ENCODE measurements at regions of chr17 and their contacts with region 1.

Region 1: GRCh38 chr17:15999439-16000350 is at the starts of genes TTC19 and ZSWIM7:
- DNase-seq: peak; percentile 99
- ATAC-seq: peak; percentile 92 to 97 (median 94)
- H3K4me3 ChIP-seq: peak within 1 kb of the TSS; percentile 65 to 82 (median 76)
- H3K27ac ChIP-seq: peak within 1 kb of the TSS; percentile 88 to 96 (median 91)
- H3K4me1 ChIP-seq: peaks cover 0 to 14% (median 0%) of the 10 kb centered on the region in 4 donors
- H3K27me3 ChIP-seq: no peaks in the 10 kb centered on the region
- CTCF ChIP-seq: peak in 3 of 4 donors; percentile 10 to 29 (median 29)
- POLR2A ChIP-seq: peak; percentile 98
- total RNA-seq, gene TTC19: 14.3 to 32.3 (median 19.9) TPM
- total RNA-seq, gene ZSWIM7: 10.6 to 21.8 (median 11.8) TPM

Region 2: GRCh38 chr17:15944759-15945529 is 54.8 kb before region 1 on chr17 and contains the start of gene ADORA2B:
- intact Hi-C with region 1: loop called in 1 of 2 experiments (anchors 10 kb)
- DNase-seq: peak; percentile 58 to 76 (median 71)
- ATAC-seq: peak; percentile 85 to 88 (median 87)
- H3K4me3 ChIP-seq: peak within 1 kb of the TSS; percentile 46 to 59 (median 49)
- H3K27ac ChIP-seq: no peak within 1 kb of the TSS
- H3K4me1 ChIP-seq: peaks cover 0 to 10% (median 3%) of the 10 kb centered on the region in 4 donors
- H3K27me3 ChIP-seq: no peaks in the 10 kb centered on the region
- CTCF ChIP-seq: peak; percentile 40 to 65 (median 53)
- POLR2A ChIP-seq: no peak
- total RNA-seq, gene ADORA2B: 0.16 to 0.62 (median 0.37) TPM in 5 of 6 experiments, not detected in the other

Measured in right lobe of liver (tissue), 6 donors.